Activated CD4-positive, alpha-beta T cell treated with anti-CD3 and anti-CD28 coated beads for 36 hours (primary cell): ENCODE measurements at regions of chr12 and their contacts with region 1.

Region 1: DNA sequence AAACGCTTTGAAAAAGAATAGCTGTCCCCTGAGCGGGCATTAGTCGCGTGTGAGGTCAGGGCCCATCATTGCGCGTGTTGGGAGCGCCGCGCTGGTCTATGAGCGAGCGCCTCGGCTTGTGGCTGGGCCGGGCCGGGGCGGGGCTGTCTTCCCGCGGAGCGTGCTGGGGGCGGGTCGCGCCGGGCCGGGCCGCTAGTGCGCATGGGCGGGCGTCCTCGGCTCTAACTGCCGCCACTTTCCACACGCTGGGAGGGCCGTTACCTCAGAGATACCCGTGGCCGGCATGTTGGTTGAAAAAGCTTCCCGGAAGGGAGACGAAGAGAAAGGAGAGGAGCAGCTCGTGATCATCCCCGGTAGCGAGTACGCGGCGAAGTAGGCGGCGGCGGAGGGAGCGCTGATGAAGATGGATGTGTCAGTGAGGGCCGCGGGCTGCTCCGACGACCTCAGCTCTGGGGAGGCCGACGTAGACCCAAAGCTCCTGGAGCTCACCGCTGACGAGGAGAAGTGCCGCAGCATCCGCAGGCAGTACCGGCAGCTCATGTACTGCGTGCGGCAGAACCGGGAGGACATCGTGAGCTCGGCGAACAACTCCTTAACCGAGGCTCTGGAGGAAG is at the start of gene EID3:
- DNase-seq: peak; percentile 95
- ATAC-seq: peak; percentile 97
- H3K4me3 Mint-ChIP-seq: peak within 1 kb of the TSS; percentile 81
- H3K27ac Mint-ChIP-seq: peak within 1 kb of the TSS; percentile 96
- H3K4me1 Mint-ChIP-seq: peaks cover 57% of the 10 kb centered on the region
- H3K27me3 Mint-ChIP-seq: no peaks in the 10 kb centered on the region
- total RNA-seq, gene EID3: 3.9 to 4.6 TPM

Region 2: DNA sequence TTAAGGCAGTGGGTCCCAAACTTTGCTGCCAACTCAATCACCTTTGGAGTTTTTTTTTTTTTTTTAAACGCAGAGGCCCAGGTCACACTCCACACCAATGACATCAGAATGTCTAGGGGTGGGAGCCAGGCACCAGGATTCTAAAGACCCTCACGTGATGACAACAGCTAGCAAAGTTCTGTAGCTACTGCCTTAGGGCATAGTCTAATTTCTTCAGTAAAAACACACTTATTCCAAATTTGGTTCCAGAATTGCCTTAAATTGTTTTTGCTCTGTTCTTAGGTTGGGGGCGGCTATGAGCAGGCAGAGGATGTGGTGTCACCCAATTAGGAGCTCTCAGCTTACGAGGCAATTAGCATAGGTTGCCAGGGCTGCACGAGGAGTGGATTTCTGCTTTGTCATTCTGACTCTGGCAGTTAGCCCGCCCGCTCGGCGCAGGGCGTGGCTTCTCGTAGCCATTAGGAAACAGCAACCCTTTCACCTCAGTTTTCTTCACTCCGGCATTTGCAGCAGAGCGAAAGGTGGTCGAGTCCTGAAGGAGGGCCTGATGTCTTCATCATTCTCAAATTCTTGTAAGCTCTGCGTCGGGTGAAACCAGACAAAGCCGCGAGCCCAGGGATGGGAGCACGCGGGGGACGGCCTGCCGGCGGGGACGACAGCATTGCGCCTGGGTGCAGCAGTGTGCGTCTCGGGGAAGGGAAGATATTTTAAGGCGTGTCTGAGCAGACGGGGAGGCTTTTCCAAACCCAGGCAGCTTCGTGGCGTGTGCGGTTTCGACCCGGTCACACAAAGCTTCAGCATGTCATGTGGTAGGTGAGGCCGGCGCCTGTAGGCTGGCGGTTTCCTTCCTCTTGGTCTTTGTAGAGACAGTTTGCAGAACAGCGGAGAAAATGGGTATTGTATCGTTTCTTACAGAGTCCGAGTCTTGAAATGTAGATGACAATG is 16.8 kb before region 1 on chr12:
- CTCF ChIA-PET with region 1: interaction called, 30 read pairs
- POLR2A ChIA-PET with region 1: interaction called, 14 read pairs
- intact Hi-C with region 1: loop called (anchors 1 kb)
- DNase-seq: peak; percentile 95
- ATAC-seq: peak; percentile 84
- H3K4me3 Mint-ChIP-seq: peak overlapping the region; percentile 95
- H3K27ac Mint-ChIP-seq: peak overlapping the region; percentile 97
- H3K4me1 Mint-ChIP-seq: peaks cover 12% of the 10 kb centered on the region
- H3K27me3 Mint-ChIP-seq: no peaks in the 10 kb centered on the region

Region 3: DNA sequence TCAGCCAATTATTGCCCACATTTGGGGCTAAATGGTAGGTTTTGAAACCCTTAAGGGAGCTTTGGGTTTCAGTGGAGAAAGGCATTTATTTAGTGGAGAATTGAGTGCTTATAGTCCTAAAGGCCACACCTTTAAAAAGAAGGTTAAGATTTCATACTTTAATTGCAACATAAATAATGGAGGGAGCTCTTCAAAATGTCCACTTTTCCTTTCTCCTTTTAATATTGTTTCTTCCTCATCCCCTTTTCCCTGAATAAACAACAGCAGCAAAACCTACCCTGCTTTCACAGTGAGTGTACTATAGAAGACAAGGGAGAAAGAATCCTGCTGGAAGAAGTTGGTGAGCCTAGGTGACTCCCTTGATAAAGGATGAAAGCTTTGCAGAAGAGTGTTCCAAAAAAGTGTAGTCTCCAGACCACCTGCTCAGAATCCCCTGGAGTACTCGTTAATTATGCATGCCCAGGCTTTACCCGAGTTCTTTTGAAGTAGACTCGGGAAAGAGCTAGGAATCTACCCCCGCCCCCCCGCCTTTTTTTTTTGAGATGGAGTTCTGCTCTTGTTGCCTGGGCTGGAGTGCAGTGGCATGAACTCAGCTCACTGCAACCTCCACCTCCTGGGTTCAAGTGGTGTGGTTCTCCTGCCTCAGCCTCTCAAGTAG is 11.6 kb before region 1 on chr12:
- CTCF ChIA-PET with region 1: interaction called, 30 read pairs
- POLR2A ChIA-PET with region 1: interaction called, 14 read pairs
- intact Hi-C with region 1: loop called (anchors 1 kb)
- DNase-seq: no peak
- ATAC-seq: no peak
- H3K4me3 Mint-ChIP-seq: no peak overlapping the region
- H3K27ac Mint-ChIP-seq: no peak overlapping the region
- H3K4me1 Mint-ChIP-seq: peaks cover 17% of the 10 kb centered on the region
- H3K27me3 Mint-ChIP-seq: no peaks in the 10 kb centered on the region

Region 4: GRCh38 chr12:104315326-104316239 is 11.9 kb after region 1 on chr12:
- CTCF ChIA-PET with region 1: no interaction called
- POLR2A ChIA-PET with region 1: no interaction called
- intact Hi-C with region 1: no loop called
- DNase-seq: no peak
- ATAC-seq: no peak
- H3K4me3 Mint-ChIP-seq: no peak overlapping the region
- H3K27ac Mint-ChIP-seq: no peak overlapping the region
- H3K4me1 Mint-ChIP-seq: no peaks in the 10 kb centered on the region
- H3K27me3 Mint-ChIP-seq: no peaks in the 10 kb centered on the region